Activated T-helper 1 cell treated with anti-CD3 and anti-CD28 coated beads, Interleukin-12 subunit alpha, Interleukin-12 subunit beta, Interleukin-2, Interleukin-4 antibody, amounts not matched to agents 30 ng/mL and 10 ng/mL and 1 ng/mL, durations not matched to agents 14 hours and 24 hours and 36 hours (primary cell): ENCODE measurements at regions of chrX and their contacts with region 1.

Region 1: GRCh38 chrX:74614093-74614909 is at the start of gene RLIM:
- DNase-seq: peak; percentile 88
- H3K4me3 Mint-ChIP-seq: peak within 1 kb of the TSS; percentile 100
- H3K27ac Mint-ChIP-seq: peak within 1 kb of the TSS; percentile 99
- H3K4me1 Mint-ChIP-seq: peaks cover 7% of the 10 kb centered on the region
- H3K27me3 Mint-ChIP-seq: no peaks in the 10 kb centered on the region
- total RNA-seq, gene RLIM: 30.5 and 31.4 TPM in 2 replicates

Region 2: DNA sequence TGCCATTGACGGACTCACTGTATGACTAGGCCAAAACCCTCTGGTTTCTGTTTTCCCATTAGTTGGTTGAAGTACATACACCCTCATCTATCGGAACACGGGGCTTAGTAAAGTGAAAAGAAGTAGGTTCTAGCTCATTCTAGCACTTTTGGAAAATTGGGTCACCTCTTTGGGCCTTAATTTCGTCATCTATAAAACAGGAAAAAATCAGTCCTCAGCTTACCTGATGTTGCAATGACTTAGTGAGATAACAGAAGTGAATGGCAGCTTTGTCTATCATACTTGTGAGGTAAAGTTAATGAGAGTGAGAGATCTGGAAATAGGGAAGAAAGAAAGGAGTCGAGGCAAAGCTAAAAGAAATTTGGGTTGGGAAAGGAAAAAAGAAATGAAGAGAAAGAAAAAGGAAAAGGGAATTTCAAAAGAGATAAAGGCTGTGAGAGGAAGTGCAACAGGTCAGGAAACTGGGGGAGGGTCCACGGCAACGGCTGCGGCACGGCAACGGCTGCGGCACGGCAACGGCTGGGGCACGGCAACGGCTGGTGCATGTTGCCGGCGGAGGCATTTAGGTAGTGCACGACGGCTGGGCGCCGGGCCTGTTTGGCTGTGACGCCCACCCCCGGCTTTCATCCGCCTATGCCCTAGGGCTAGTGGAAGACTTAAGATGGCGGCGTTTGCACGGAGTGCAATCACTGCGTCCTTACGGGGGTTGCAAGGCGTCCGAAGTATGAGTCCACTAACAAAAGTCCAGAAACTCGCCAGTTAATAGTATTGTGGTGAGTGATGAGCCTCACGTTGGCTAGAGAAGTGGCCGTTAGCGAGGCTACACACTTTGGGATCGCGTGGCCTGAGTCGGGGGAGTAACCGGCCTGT is 670.4 kb before region 1 on chrX:
- intact Hi-C with region 1: loop called (anchors 1 kb)
- DNase-seq: peak; percentile 78
- H3K4me3 Mint-ChIP-seq: peak overlapping the region; percentile 96
- H3K27ac Mint-ChIP-seq: peak overlapping the region; percentile 89
- H3K4me1 Mint-ChIP-seq: peaks cover 7% of the 10 kb centered on the region
- H3K27me3 Mint-ChIP-seq: no peaks in the 10 kb centered on the region

Region 3: GRCh38 chrX:74251006-74251930 is 363.0 kb before region 1 on chrX:
- intact Hi-C with region 1: no loop called
- DNase-seq: no peak
- H3K4me3 Mint-ChIP-seq: no peak overlapping the region
- H3K27ac Mint-ChIP-seq: no peak overlapping the region
- H3K4me1 Mint-ChIP-seq: no peaks in the 10 kb centered on the region
- H3K27me3 Mint-ChIP-seq: no peaks in the 10 kb centered on the region

Region 4: GRCh38 chrX:74579597-74580198 is 34.6 kb before region 1 on chrX:
- intact Hi-C with region 1: loop called (anchors 1 kb)
- DNase-seq: no peak
- H3K4me3 Mint-ChIP-seq: no peak overlapping the region
- H3K27ac Mint-ChIP-seq: peak overlapping the region; percentile 55
- H3K4me1 Mint-ChIP-seq: peaks cover under 1% of the 10 kb centered on the region
- H3K27me3 Mint-ChIP-seq: no peaks in the 10 kb centered on the region

Region 5: DNA sequence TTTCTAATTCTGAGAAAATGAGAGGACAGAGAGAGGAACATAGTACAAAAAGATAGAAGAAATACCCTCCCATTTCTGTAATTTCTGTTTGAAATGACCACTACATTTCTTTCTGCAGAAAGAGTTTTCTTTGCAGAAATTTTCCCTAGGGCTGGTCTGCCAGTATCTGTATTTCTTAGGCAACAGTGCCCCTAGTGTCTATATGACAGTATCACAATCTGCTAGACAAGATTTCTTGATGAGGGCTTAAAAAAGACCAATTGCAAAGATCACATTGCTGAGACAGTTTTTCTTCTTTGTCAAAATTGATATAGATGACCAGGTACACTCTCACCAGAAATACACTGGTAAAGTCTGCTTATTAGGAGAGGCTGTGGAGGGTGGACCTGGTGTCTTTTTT is 989.5 kb after region 1 on chrX:
- intact Hi-C with region 1: loop called (anchors 10 kb)
- DNase-seq: no peak
- H3K4me3 Mint-ChIP-seq: no peak overlapping the region
- H3K27ac Mint-ChIP-seq: no peak overlapping the region
- H3K4me1 Mint-ChIP-seq: no peaks in the 10 kb centered on the region
- H3K27me3 Mint-ChIP-seq: no peaks in the 10 kb centered on the region

Region 6: DNA sequence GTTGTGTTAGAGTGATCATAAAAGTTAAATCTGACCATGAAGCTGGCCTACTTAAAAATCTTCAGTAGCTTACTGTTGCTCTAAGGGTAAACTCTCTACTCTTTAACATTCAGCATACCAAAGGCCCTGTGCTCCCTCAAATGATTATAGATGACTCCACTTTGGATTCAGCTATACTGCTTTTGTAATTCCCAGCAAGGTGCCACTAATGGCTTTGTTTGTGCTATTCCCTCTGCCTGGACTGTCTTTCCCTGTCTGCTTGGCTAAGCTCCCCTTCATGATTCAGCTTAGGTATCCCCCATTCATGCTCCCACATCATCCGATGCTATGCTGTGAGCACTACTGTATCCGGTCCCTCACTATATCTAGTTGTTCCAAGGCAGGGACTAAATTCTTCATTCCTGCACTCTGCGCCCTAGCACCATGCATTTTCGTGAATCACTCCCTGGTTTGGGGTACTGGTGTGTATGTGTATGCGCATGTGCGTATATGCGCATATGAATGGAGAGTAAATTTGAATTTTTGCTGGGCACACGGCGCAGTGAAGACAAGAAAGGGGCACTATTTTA is 1558.1 kb after region 1 on chrX:
- intact Hi-C with region 1: loop called (anchors 2 kb)
- DNase-seq: no peak
- H3K4me3 Mint-ChIP-seq: peak overlapping the region; percentile 94
- H3K27ac Mint-ChIP-seq: peak overlapping the region; percentile 98
- H3K4me1 Mint-ChIP-seq: peaks cover 38% of the 10 kb centered on the region
- H3K27me3 Mint-ChIP-seq: no peaks in the 10 kb centered on the region